ENCODE measurements at regions of chr18 and their contacts with region 1.

Region 1: DNA sequence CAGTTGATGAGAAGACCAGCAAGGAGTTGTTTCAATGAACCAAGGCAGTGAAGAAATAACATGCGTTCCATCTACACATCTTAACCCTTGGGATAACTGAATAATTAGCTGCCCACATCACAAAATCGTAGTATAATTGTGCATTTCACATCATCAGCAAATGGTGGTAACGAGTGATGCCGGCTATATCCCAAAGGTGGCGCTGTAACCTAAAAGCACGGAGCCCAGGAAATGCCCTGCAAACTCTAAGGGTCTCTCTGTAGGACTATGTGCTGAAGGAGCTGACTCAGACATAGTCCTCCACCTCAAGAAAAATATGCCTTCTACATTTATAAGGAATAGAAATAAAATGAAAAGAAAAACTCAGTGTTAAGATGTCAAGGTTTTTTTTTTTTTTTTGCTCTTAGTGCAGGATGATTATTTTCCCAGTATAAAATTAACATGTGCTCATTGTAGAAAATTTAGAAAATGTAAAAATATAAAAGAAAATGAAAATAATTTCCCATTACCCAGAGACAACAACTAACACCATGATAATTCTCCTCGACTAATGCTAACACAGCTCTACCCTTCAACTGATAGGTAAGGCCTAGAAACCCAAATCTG is 23.1 kb upstream of the DSG3 start:
- DNase-seq: peak in 1 of 2 experiments; percentile 76
- H3K4me3 ChIP-seq: no peak overlapping the region
- H3K27ac ChIP-seq: no peak overlapping the region
- H3K4me1 ChIP-seq: no peaks in the 10 kb centered on the region
- H3K27me3 ChIP-seq: no peaks in the 10 kb centered on the region
- CTCF ChIP-seq: peak; percentile 66 to 91 (median 82)
- EP300 ChIP-seq: no peak
- POLR2A ChIP-seq: no peak
- RAD21 ChIP-seq: peak; percentile 91 to 93

Region 2: GRCh38 chr18:31386741-31387140 is 37.7 kb before region 1 on chr18:
- CTCF ChIA-PET with region 1: no interaction called
- POLR2A ChIA-PET with region 1: no interaction called
- DNase-seq: no peak
- H3K4me3 ChIP-seq: no peak overlapping the region
- H3K27ac ChIP-seq: no peak overlapping the region
- H3K4me1 ChIP-seq: peaks cover 0 to 2% (median under 1%) of the 10 kb centered on the region in 4 experiments; a peak in 2 of 7 replicates
- H3K27me3 ChIP-seq: no peaks in the 10 kb centered on the region
- CTCF ChIP-seq: no peak
- EP300 ChIP-seq: no peak
- POLR2A ChIP-seq: no peak
- RAD21 ChIP-seq: no peak

Region 3: DNA sequence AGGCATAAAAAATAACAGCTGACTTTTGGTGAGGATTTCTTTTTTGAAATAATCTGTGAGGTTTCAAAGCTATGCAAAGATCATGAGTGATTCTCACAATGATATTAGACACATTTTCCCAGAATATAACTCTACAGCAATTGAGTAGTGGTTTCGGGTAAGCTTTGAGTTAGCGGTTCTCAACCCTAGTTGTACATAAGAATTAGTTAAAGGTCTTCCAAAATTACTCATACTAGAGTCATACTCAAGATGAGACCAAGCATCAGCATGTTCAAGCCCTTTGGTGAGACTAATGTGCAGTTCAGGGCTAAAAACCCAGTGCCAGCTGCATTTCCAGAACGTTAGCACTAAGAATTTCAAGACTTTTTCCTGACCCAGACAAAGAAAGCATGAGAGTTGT is 16.8 kb before region 1 on chr18:
- CTCF ChIA-PET with region 1: interaction called, 12 read pairs
- POLR2A ChIA-PET with region 1: no interaction called
- DNase-seq: no peak
- H3K4me3 ChIP-seq: no peak overlapping the region
- H3K27ac ChIP-seq: no peak overlapping the region
- H3K4me1 ChIP-seq: no peaks in the 10 kb centered on the region
- H3K27me3 ChIP-seq: no peaks in the 10 kb centered on the region
- CTCF ChIP-seq: no peak
- EP300 ChIP-seq: no peak
- POLR2A ChIP-seq: no peak
- RAD21 ChIP-seq: no peak

Region 4: GRCh38 chr18:31438402-31438801 is 13.9 kb after region 1 on chr18:
- CTCF ChIA-PET with region 1: interaction called, 47 read pairs
- POLR2A ChIA-PET with region 1: no interaction called
- DNase-seq: no peak
- H3K4me3 ChIP-seq: no peak overlapping the region
- H3K27ac ChIP-seq: no peak overlapping the region
- H3K4me1 ChIP-seq: no peaks in the 10 kb centered on the region
- H3K27me3 ChIP-seq: no peaks in the 10 kb centered on the region
- CTCF ChIP-seq: no peak
- EP300 ChIP-seq: no peak
- POLR2A ChIP-seq: no peak
- RAD21 ChIP-seq: no peak

Region 5: DNA sequence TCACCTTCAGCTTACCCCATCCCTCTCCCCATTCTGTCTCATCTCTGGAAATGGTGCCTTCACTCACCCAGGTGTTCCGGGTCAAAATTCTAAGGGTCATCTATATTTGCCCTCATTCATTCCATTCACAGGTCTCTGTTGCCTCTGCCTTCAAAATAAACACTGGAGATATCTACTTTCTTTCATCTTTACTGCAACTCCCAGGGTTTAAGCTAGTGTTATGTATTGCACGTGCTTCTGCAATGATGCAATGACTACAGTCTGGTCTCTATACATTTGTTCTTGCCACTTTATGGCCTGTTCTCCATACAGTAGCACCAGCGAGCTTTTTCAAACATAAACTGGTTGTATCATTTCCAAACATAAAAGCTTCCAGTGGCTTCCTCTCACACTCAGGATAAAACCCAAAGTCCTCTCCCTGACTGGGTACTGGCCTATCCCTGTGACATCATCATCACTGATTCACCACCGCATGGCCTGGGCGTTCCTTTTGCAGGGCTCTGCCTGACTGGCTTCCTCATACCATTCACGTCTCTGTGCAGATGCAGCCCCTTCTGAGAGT is 87.8 kb after region 1 on chr18:
- CTCF ChIA-PET with region 1: interaction called, 12 read pairs
- POLR2A ChIA-PET with region 1: no interaction called
- DNase-seq: no peak
- H3K4me3 ChIP-seq: no peak overlapping the region
- H3K27ac ChIP-seq: no peak overlapping the region
- H3K4me1 ChIP-seq: peaks cover 0 to 14% (median 6%) of the 10 kb centered on the region in 4 experiments; a peak in 4 of 7 replicates
- H3K27me3 ChIP-seq: no peaks in the 10 kb centered on the region
- CTCF ChIP-seq: no peak
- EP300 ChIP-seq: no peak
- POLR2A ChIP-seq: no peak
- RAD21 ChIP-seq: no peak